ENCODE measurements at regions of chr5 and their contacts with region 1.

Region 1: DNA sequence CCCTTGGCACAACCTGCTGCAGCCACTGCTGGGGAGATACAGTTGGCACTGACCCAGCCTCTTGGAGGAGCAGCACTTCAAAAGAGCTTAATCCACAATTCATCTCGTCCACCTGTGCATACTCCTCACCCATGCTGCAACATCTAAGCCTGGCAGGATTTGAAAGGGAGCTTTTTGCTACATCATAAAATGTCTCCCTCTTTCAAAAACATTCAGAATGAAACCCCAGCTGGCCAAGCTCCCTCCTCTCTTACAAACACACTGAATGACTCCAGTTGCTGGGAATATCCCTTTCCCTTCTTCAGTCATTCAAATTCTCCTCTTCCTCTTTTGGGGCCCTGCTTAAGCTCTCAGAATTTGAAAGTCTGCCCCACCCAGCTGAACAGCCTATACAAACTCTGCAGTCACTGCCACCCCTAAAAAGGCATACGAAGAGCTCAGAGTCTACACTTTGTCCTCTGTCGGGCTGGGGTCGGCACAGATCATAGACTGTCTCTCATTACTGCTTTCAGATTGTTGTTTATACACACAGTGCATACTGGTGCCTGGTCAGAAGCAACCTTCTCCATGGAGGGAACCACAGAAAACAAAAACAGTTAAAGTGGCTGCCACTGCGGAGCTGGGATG is 8.8 kb upstream of the C5orf15 start:
- DNase-seq: no peak
- H3K4me3 ChIP-seq: no peak overlapping the region
- H3K27ac ChIP-seq: peak overlapping the region in 1 of 2 experiments; percentile 88; a peak in 2 of 4 replicates
- H3K4me1 ChIP-seq: peaks cover 0 to 18% of the 10 kb centered on the region in 2 experiments; a peak in 1 of 4 replicates
- H3K27me3 ChIP-seq: no peaks in the 10 kb centered on the region
- CTCF ChIP-seq: no peak
- EP300 ChIP-seq: no peak
- RAD21 ChIP-seq: no peak

Region 2: GRCh38 chr5:133962801-133963476 is 14.3 kb before region 1 on chr5:
- CTCF ChIA-PET with region 1: interaction called, 11 read pairs
- POLR2A ChIA-PET with region 1: no interaction called
- DNase-seq: no peak
- H3K4me3 ChIP-seq: no peak overlapping the region
- H3K27ac ChIP-seq: peak overlapping the region in 1 of 2 experiments; percentile 66; a peak in 2 of 4 replicates
- H3K4me1 ChIP-seq: peaks cover 8 to 27% of the 10 kb centered on the region in 2 experiments; a peak in 3 of 4 replicates
- H3K27me3 ChIP-seq: no peaks in the 10 kb centered on the region
- CTCF ChIP-seq: no peak
- EP300 ChIP-seq: no peak
- RAD21 ChIP-seq: no peak

Region 3: DNA sequence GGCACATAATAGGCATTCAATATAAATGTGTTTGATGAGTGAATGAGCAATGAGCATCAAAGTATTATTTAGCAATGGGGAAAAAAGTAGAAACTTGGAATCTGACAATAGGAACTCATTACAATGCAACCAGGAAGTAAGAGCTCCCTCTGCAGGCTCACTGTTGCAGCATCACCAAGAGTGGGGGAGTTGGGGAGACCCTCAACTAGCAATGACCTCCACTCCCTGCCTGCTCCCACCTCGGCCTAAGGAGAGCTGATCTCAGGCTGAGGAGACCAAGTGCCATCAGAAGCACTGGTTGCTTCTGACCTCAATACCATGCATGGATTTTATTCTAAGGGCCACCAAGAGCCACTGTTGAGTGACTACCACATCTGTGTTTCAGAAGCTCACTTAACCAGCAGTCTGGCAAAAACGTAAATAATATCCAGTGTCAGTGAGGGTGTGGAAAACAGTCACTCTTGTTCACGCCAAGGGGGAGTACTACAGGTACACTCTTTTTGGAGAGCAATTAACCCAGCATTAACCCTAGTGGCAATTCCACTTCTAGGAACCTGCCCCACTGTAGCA is 19.5 kb after region 1 on chr5:
- CTCF ChIA-PET with region 1: interaction called, 62 read pairs
- POLR2A ChIA-PET with region 1: no interaction called
- DNase-seq: peak; percentile 55
- H3K4me3 ChIP-seq: no peak overlapping the region
- H3K27ac ChIP-seq: no peak overlapping the region
- H3K4me1 ChIP-seq: peaks cover 35 to 38% of the 10 kb centered on the region in 2 experiments; a peak in 2 of 4 replicates
- H3K27me3 ChIP-seq: no peaks in the 10 kb centered on the region
- CTCF ChIP-seq: peak; percentile 68
- EP300 ChIP-seq: no peak
- RAD21 ChIP-seq: peak; percentile 31; the same call in 1 of the 2 replicates

Region 4: GRCh38 chr5:134004592-134005375 is 27.5 kb after region 1 on chr5 and contains the start of gene VDAC1:
- CTCF ChIA-PET with region 1: interaction called, 13 read pairs
- POLR2A ChIA-PET with region 1: no interaction called
- DNase-seq: peak; percentile 98
- H3K4me3 ChIP-seq: peak within 1 kb of the TSS; percentile 75 to 83
- H3K27ac ChIP-seq: peak within 1 kb of the TSS; percentile 92 to 95
- H3K4me1 ChIP-seq: peaks cover 16 to 36% of the 10 kb centered on the region in 2 experiments; a peak in 2 of 4 replicates
- H3K27me3 ChIP-seq: no peaks in the 10 kb centered on the region
- CTCF ChIP-seq: no peak
- EP300 ChIP-seq: no peak
- RAD21 ChIP-seq: no peak
- polyA plus RNA-seq, gene VDAC1: 155 and 166 TPM in 2 replicates